ENCODE measurements at regions of chr1 and their contacts with region 1.

Region 1: DNA sequence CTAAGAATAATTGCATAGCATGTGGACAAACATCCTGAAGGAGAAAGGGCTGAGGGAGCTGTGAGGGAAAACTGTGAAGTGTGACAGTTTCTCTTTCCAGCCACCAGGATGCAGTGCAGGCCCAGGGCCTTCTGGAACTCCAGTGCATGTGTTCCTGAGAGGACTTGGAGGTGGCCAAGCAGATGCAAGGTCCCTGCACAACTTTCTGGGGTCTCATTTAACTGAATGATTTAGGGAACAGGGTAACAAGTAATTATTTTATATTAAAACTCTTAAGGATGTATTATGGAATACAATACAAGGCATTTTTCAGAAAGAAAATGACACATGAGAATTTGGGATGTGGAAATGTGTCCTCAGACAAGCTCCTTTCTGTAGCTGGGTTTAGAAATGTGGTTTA is 61.2 kb upstream of the MCOLN3 start:
- DNase-seq: peak; percentile 51 to 57
- H3K4me3 ChIP-seq: no peak overlapping the region
- H3K4me3 Mint-ChIP-seq: no peak overlapping the region
- H3K27ac Mint-ChIP-seq: no peak overlapping the region
- H3K4me1 ChIP-seq: no peaks in the 10 kb centered on the region
- H3K4me1 Mint-ChIP-seq: peaks cover 5% of the 10 kb centered on the region
- H3K27me3 ChIP-seq: no peaks in the 10 kb centered on the region
- H3K27me3 Mint-ChIP-seq: peaks cover 3% of the 10 kb centered on the region
- CTCF ChIP-seq: peak; percentile 66 to 80

Region 2: DNA sequence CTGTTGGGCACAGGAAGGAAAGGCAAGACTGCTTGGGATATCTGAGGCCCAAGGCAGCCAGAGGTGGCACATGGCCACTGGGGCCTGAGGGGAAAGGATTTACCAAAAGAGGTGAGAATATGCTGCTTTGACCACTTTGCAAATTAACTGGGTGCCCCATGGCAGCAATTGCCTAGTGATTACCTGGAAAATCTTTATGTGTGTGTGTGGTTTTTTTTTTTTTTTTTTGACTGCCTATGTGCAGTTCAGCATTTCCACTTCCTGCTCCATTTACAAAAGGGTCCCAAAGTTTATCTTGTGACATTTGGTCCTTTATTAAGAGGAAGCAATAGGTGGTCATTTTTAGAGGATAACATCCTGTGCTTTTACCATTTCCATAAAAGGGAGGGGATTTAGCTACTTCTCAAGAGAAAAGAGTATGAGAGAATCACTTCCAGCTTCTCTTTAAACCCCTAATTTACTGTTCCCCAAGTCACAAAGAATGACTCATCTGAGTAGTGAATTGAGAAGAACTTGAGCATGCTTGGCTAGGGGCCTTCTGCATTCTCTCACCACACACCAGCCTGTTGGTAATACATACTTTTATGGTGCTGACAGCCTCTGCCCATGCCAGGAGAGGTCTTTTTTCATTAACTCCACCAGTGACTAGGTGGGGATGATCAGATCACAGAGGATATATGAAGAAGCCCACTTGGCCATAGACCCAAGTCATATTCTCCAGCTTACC is 39.2 kb after region 1 on chr1:
- CTCF ChIA-PET with region 1: no interaction called
- POLR2A ChIA-PET with region 1: no interaction called
- intact Hi-C with region 1: loop called (anchors 5 kb)
- DNase-seq: no peak
- H3K4me3 ChIP-seq: no peak overlapping the region
- H3K4me3 Mint-ChIP-seq: no peak overlapping the region
- H3K27ac Mint-ChIP-seq: no peak overlapping the region
- H3K4me1 ChIP-seq: peaks cover 25% of the 10 kb centered on the region
- H3K4me1 Mint-ChIP-seq: peaks cover 31% of the 10 kb centered on the region
- H3K27me3 ChIP-seq: no peaks in the 10 kb centered on the region
- H3K27me3 Mint-ChIP-seq: no peaks in the 10 kb centered on the region
- CTCF ChIP-seq: no peak

Region 3: DNA sequence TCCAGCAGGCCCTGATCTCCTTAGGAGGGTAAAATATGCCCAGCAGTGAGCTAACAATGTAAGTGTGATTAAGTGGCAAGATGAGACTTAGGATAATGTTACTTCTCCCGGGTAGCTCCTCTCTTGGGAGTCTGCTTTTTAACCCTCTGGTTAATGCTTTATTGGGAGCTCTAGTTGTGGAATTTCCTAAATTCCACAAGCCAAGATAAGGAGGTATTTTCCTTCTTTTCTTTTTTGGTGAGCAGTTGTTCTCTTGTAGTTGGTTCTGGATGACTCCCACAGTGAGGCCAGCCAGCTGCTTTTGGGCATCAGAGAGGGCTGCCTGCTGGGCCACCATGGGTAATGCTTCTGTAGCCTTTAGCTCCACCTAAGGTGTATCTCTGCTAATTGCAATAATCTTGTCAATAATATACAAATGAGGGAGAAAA is 130.7 kb after region 1 on chr1:
- CTCF ChIA-PET with region 1: interaction called, 13 read pairs
- POLR2A ChIA-PET with region 1: no interaction called
- intact Hi-C with region 1: loop called (anchors 1 kb)
- DNase-seq: peak; percentile 37 to 40
- H3K4me3 ChIP-seq: no peak overlapping the region
- H3K4me3 Mint-ChIP-seq: no peak overlapping the region
- H3K27ac Mint-ChIP-seq: no peak overlapping the region
- H3K4me1 ChIP-seq: peaks cover 30% of the 10 kb centered on the region
- H3K4me1 Mint-ChIP-seq: peaks cover 6% of the 10 kb centered on the region
- H3K27me3 ChIP-seq: no peaks in the 10 kb centered on the region
- H3K27me3 Mint-ChIP-seq: no peaks in the 10 kb centered on the region
- CTCF ChIP-seq: no peak

Region 4: GRCh38 chr1:85259118-85259911 is 149.8 kb after region 1 on chr1 and contains the start of gene C1orf52:
- CTCF ChIA-PET with region 1: interaction called, 17 read pairs
- POLR2A ChIA-PET with region 1: no interaction called
- intact Hi-C with region 1: loop called (anchors 1 kb)
- DNase-seq: peak; percentile 90 to 94
- H3K4me3 ChIP-seq: peak within 1 kb of the TSS; percentile 80
- H3K4me3 Mint-ChIP-seq: peak within 1 kb of the TSS; percentile 95
- H3K27ac Mint-ChIP-seq: peak within 1 kb of the TSS; percentile 87
- H3K4me1 ChIP-seq: no peaks in the 10 kb centered on the region
- H3K4me1 Mint-ChIP-seq: peaks cover 15% of the 10 kb centered on the region
- H3K27me3 ChIP-seq: no peaks in the 10 kb centered on the region
- H3K27me3 Mint-ChIP-seq: no peaks in the 10 kb centered on the region
- CTCF ChIP-seq: peak; percentile 75 to 86
- total RNA-seq, gene C1orf52: 30.4 and 30.7 TPM in 2 replicates

Measured in Caco-2 (cell line).